Right ventricle myocardium inferior (tissue), 1 donor: ENCODE measurements at regions of chr6 and their contacts with region 1.

Region 1: GRCh38 chr6:111724505-111724904 is 118.8 kb upstream of the TRAF3IP2 start:
- DNase-seq: no peak
- ATAC-seq: no peak

Region 2: GRCh38 chr6:110958329-110959192 is 765.9 kb before region 1 on chr6 and contains the start of gene GTF3C6:
- intact Hi-C with region 1: no loop called
- DNase-seq: peak; percentile 99
- ATAC-seq: peak; percentile 99
- total RNA-seq, gene GTF3C6: 129 TPM

Region 3: GRCh38 chr6:111799576-111800258 is 75.2 kb after region 1 on chr6:
- intact Hi-C with region 1: loop called (anchors 2 kb)
- DNase-seq: no peak
- ATAC-seq: no peak

Region 4: GRCh38 chr6:111812060-111813038 is 87.8 kb after region 1 on chr6:
- intact Hi-C with region 1: no loop called
- DNase-seq: no peak
- ATAC-seq: no peak